ENCODE measurements at regions of chr9 and their contacts with region 1.

Region 1: GRCh38 chr9:116149844-116150243 is 3.7 kb upstream of the PAPPA start:
- ATAC-seq: peak in 3 of 8 experiments; percentile 2 to 66 (median 19)
- H3K4me3 ChIP-seq: no peak overlapping the region
- H3K27ac ChIP-seq: no peak overlapping the region
- H3K4me1 ChIP-seq: peaks cover 3 to 10% of the 10 kb centered on the region in 2 donors

Region 2: DNA sequence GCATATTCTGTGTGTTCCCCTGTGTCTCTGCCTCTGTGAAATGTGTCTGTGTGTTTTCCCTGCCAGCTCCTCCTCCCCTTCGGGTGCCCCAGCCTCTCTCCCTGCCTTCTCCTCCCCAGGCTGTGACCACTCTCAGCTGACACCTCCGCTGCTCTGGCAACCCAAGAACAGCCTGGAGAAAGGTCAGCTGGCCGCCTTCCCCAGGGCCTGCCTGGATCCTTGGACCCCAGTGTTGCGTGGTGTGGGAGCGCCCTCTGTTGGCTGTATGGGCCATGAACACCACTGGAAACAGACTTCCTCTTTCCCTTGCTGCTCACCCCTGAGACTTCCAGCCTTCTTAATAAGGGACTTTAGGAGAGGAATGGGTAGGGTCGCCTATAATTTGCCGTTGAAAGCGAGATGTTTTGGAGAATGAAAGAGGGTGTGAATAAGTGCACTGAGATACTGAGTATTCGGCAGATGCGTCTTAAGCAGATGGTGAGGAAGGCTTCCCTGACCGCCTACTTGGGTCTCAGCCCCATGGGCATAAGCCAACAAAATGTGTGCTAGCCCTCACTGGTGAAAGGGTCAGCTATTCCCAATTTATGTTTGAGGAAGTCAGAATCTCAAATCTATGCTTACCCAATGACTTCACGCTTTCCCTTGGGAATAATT is 422.4 kb after region 1 on chr9:
- in situ Hi-C with region 1: loop called in 2 of 9 experiments (anchors 25 kb)
- ATAC-seq: peak; percentile 68 to 100 (median 100)
- H3K4me3 ChIP-seq: no peak overlapping the region
- H3K27ac ChIP-seq: peak overlapping the region in 1 of 2 donors; percentile 1
- H3K4me1 ChIP-seq: peaks cover 19 to 20% of the 10 kb centered on the region in 2 donors

Region 3: DNA sequence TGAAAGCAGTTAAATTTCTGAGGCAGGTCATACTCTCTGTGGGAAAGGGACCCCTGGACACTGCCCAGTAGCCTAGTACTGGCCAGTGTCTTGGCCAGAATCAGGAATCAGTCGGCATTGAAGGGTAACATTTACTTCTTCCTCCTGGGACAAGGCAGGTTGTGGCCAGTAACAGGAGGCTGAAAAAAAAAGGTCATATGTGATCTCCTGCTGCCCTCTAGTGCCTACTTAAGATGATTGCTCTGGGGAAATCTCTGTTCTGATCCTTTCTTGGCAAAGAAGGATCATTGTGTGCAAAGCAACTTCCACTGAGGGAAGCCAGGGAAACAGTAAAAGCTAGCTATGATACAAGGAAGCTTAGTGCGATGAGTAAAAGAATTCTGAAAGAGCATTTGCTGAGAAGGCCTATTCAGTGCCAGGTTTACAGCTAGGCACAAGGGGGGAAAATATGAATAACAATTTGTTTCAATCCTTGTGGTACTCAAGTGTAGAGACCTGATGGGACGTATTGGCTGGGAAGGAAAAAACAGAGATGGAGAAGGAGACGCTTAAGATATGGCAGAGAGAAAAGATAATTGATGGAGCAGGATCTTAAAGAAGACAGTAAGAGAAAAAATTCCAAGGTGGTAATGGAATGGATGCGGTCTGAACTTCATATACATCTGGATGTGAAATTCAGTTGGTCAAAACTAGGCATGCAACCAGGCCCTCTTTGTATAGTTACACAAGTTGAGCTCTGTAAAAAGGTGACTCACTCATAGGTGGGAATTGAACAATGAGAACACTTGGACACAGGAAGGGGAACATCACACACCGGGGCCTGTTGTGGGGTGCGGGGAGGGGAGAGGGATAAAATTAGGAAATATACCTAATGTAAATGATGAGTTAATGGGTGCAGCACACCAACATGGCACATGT is 511.5 kb after region 1 on chr9:
- in situ Hi-C with region 1: loop called in 2 of 9 experiments (anchors 25 kb)
- ATAC-seq: peak; percentile 85 to 98 (median 90)
- H3K4me3 ChIP-seq: no peak overlapping the region
- H3K27ac ChIP-seq: no peak overlapping the region
- H3K4me1 ChIP-seq: peaks cover 3 to 17% of the 10 kb centered on the region in 2 donors

Region 4: DNA sequence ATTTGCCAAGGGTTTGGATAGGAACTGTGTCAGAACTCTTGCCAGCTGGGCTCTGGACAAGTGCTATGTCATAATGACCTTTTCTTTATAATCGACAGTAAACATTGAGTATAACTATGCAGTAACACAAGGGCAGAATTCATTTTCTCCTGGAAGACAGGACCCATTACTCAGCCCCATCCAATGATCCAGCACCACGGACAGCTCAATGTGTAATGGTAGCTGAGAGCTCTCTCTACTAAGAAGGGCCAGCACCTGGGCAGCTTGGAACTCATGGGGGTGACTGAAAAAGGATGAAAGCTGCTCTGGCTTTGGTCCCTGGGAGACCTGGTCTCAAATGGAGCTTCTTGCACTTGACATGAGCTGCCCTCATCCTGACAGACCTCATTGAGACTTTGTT is 885.0 kb after region 1 on chr9:
- in situ Hi-C with region 1: no loop called
- ATAC-seq: peak in 2 of 8 experiments; percentile 18 to 59
- H3K4me3 ChIP-seq: no peak overlapping the region
- H3K27ac ChIP-seq: no peak overlapping the region
- H3K4me1 ChIP-seq: no peaks in the 10 kb centered on the region